HCT116 (cell line): ENCODE measurements at regions of chr16 and their contacts with region 1.

Region 1: DNA sequence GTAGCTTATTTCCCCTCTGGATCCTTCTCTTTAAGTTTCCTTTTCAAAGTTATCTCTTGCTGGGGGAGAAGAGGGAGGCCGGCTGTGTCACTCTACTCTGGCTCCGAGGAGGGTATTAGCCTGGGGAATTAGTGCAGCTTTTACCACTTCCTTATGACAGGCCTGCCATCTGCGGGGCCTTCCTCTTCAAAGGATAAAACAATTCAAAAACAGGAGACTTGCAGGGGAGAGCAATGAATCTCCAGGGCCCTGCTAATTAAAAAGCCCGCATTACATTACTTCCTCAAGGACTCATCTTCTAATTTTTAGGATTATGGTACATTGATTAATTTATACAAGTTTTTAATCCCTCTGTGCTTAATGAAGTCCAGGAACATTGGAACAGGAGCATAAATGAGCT is 190.9 kb upstream of the CDH5 start:
- DNase-seq: no peak
- ATAC-seq: no peak
- H3K4me3 ChIP-seq: no peak overlapping the region
- H3K27ac ChIP-seq: no peak overlapping the region
- H3K4me1 ChIP-seq: no peaks in the 10 kb centered on the region
- H3K27me3 ChIP-seq: peaks cover 6% of the 10 kb centered on the region; the same call in 1 of the 2 replicates
- CTCF ChIP-seq: no peak
- POLR2A ChIP-seq: no peak
- RAD21 ChIP-seq: no peak

Region 2: DNA sequence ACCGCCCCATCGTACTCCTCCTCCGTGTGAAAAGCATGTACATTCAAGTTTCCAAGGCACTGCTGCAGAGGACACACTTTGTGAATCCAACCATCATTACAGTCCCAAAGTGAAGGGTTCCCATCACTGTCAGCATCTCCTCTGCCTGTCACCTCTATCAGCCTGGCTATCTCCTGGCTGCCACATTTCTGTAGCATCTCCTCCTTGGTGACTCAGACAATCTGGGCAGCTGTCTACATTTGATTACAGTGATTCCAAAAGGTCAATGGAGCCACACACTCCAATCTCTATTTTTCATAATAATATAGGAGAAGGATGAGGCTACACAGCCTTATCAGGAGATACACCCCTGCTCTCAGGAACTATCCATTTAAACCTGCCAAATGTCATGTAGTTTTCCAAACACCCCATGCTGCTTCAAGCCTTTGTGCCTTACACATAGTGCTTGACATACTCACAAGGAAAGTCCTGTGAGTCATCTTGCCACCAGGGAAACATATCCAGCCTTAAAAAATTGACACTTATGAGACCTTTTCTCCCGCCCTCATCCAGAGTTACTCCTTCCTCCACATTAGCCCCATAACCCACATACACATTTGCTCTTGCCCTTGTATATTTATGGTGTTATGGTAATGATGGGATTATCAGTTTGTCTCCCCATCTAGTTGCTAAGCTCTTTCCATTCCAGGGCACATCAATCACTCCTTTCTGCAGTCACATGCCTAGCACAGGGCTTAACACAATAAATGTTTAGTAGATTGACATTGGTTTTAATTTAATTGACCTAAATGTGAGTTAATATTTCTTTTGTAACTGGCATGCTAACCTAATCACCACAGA is 59.3 kb before region 1 on chr16:
- CTCF ChIA-PET with region 1: no interaction called
- POLR2A ChIA-PET with region 1: no interaction called
- RAD21 ChIA-PET with region 1: no interaction called
- intact Hi-C with region 1: loop called (anchors 10 kb)
- DNase-seq: no peak
- ATAC-seq: no peak
- H3K4me3 ChIP-seq: no peak overlapping the region
- H3K27ac ChIP-seq: no peak overlapping the region
- H3K4me1 ChIP-seq: no peaks in the 10 kb centered on the region
- H3K27me3 ChIP-seq: peaks cover 30% of the 10 kb centered on the region
- CTCF ChIP-seq: no peak
- POLR2A ChIP-seq: no peak
- RAD21 ChIP-seq: no peak

Region 3: GRCh38 chr16:66240631-66241395 is 65.2 kb after region 1 on chr16:
- CTCF ChIA-PET with region 1: no interaction called
- POLR2A ChIA-PET with region 1: no interaction called
- RAD21 ChIA-PET with region 1: no interaction called
- intact Hi-C with region 1: no loop called
- DNase-seq: no peak
- ATAC-seq: no peak
- H3K4me3 ChIP-seq: no peak overlapping the region
- H3K27ac ChIP-seq: no peak overlapping the region
- H3K4me1 ChIP-seq: no peaks in the 10 kb centered on the region
- H3K27me3 ChIP-seq: peaks cover 30% of the 10 kb centered on the region
- CTCF ChIP-seq: no peak
- POLR2A ChIP-seq: no peak
- RAD21 ChIP-seq: no peak